ENCODE measurements at regions of chr12 and their contacts with region 1.

Region 1: GRCh38 chr12:58139894-58140293 is 198.5 kb downstream of the ATP23 start:
- DNase-seq: no peak
- H3K4me3 ChIP-seq: no peak overlapping the region
- H3K27ac ChIP-seq: no peak overlapping the region
- H3K4me1 ChIP-seq: no peaks in the 10 kb centered on the region
- H3K27me3 ChIP-seq: no peaks in the 10 kb centered on the region
- CTCF ChIP-seq: no peak

Region 2: DNA sequence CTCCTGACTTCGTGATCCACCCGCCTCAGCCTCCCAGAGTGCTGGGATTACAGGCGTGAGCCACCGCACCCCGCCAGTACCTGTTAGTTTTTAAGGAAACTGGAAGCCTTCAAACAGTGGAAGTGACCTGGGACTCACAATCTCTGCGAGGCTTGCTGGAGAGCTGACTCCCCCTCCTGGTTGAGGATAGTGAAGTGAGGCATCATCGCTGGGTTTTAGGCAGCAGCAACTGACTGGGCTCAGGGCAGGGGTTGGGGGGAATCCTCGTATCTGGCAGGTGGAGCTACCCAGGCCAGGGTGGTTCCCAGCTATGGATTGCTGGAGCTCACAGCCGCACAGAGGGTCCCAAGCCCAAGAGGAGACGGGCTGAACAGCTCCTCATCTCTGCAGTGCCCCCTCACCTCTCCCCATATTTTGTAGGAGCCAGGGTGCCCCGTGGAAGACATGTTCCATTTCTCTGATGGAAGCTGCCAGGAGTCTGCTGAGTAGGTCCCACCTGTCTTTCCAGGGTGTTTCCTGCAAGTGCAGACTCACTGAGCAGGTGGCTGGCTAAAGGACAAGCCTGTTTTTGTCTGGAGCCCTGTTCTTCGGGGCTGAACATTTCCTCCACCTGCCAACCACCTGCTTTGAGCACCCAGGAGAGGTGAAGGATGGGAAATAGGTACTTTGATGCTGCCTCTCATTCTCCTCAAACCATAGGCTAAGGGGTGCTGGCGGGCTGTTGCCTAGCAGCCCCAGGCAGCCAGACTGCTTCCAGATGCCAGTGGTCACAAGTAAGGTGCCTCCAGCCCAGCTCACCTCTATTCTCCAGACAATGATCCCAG is 324.5 kb before region 1 on chr12:
- CTCF ChIA-PET with region 1: no interaction called
- POLR2A ChIA-PET with region 1: no interaction called
- intact Hi-C with region 1: no loop called
- DNase-seq: no peak
- H3K4me3 ChIP-seq: no peak overlapping the region
- H3K27ac ChIP-seq: no peak overlapping the region
- H3K4me1 ChIP-seq: peaks cover 7% of the 10 kb centered on the region; the same call in 1 of the 2 replicates
- H3K27me3 ChIP-seq: no peaks in the 10 kb centered on the region
- CTCF ChIP-seq: no peak

Region 3: GRCh38 chr12:58678753-58679152 is 538.9 kb after region 1 on chr12:
- CTCF ChIA-PET with region 1: interaction called, 24 read pairs
- POLR2A ChIA-PET with region 1: no interaction called
- intact Hi-C with region 1: no loop called
- DNase-seq: no peak
- H3K4me3 ChIP-seq: no peak overlapping the region
- H3K27ac ChIP-seq: no peak overlapping the region
- H3K4me1 ChIP-seq: no peaks in the 10 kb centered on the region
- H3K27me3 ChIP-seq: no peaks in the 10 kb centered on the region
- CTCF ChIP-seq: no peak

Measured in PC-9 (cell line).